Posterior vena cava (tissue), 2 donors: ENCODE measurements at regions of chr22 and their contacts with region 1.

Region 1: GRCh38 chr22:46193898-46194310 is 43.6 kb downstream of the PPARA start:
- DNase-seq: no peak

Region 2: GRCh38 chr22:46180370-46181137 is 13.3 kb before region 1 on chr22:
- intact Hi-C with region 1: loop called in 1 of 2 experiments (anchors 1 kb)
- DNase-seq: no peak